Keratinocyte (primary cell): ENCODE measurements at regions of chr3 and their contacts with region 1.

Region 1: GRCh38 chr3:69675786-69676530 is 63.3 kb upstream of the MITF start:
- DNase-seq: no peak
- H3K4me3 ChIP-seq: no peak overlapping the region
- H3K27ac ChIP-seq: no peak overlapping the region
- H3K4me1 ChIP-seq: no peaks in the 10 kb centered on the region
- H3K27me3 ChIP-seq: no peaks in the 10 kb centered on the region
- CTCF ChIP-seq: no peak

Region 2: GRCh38 chr3:69970827-69971226 is 294.9 kb after region 1 on chr3:
- dilution Hi-C with region 1: loop called (anchors 25 kb)
- DNase-seq: no peak
- H3K4me3 ChIP-seq: no peak overlapping the region
- H3K27ac ChIP-seq: no peak overlapping the region
- H3K4me1 ChIP-seq: no peaks in the 10 kb centered on the region
- H3K27me3 ChIP-seq: no peaks in the 10 kb centered on the region
- CTCF ChIP-seq: no peak